Sciatic nerve (tissue), 2 donors: ENCODE measurements at regions of chr15 and their contacts with region 1.

Region 1: DNA sequence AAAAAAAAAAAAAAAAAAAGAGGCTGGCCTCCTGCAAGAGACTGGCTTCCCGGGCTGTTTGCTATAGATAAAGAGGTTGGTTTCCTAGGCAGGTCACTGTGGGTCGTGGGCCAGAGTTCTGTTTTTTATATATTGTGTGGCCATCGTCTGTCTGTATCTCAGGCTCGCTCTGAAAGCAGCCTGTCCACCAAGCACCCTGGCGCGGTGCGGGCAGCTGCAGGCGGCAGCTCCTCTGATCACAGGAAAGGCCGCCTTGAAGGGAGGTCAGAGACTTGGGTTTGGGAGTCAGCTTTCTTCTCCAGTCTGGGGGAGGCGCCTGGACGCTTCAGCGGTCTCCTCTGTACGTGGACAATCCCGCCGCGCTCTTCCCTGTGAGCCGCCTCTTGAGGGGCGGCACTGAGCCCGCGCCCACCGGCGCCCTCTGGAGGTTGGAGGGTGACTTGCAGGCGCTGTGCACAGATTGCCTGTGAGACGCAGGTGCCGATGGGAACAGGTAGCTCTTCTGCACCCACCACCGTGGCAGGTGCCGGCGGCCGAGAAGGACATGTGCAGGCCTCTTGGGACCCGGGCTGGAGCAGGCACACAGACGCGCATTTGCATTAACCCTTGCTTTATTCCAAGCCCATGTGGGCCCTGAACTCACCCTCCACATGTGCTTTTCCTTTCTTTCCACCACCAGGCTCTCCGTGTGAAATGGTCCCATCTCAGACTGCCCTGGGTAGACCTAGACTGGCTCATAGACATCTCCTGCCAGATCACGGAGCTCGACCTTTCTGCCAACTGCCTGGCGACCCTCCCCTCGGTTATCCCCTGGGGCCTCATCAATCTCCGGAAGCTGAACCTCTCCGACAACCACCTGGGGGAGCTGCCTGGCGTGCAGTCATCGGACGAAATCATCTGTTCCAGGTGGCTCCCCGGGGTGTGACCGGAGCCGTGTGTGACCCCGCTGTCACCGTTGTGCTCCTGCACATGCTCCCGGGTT is 89.3 kb downstream of the LRRK1 start:
- DNase-seq: peak; percentile 89
- ATAC-seq: peak; percentile 84

Region 2: DNA sequence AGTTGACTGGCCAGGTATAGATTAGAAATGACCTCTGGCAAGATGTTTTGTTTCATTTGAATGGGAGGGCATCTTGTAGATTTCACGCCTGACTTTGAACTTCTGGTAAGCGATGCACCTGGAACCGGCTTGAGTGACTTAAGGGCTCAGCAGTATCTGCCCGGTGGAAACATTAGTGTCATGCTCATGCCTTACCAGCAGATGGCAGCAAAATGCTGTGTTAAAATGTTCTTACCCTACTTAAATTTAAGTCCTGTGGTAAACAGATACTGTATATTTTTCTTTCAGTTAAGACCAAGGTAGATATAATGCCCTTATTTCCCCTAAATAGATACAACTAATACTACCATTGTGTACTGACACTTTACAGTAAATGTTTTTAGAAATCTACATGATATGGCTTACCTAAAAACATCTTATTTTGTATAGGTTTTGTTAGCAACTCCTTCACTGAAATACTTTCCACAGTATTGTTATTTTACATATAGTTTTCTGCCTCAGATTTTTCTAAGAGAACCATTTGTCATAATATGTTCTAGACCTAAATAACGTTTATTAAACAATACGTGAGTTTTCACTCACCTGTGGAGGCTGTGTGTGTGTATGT is 380.6 kb before region 1 on chr15:
- intact Hi-C with region 1: loop called (anchors 5 kb)
- DNase-seq: peak; percentile 68
- ATAC-seq: peak; percentile 89

Region 3: GRCh38 chr15:100918034-100918689 is 90.3 kb before region 1 on chr15:
- intact Hi-C with region 1: loop called (anchors 5 kb)
- DNase-seq: peak; percentile 85
- ATAC-seq: peak; percentile 94